B cell (primary cell): ENCODE measurements at regions of chr4 and their contacts with region 1.

Region 1: DNA sequence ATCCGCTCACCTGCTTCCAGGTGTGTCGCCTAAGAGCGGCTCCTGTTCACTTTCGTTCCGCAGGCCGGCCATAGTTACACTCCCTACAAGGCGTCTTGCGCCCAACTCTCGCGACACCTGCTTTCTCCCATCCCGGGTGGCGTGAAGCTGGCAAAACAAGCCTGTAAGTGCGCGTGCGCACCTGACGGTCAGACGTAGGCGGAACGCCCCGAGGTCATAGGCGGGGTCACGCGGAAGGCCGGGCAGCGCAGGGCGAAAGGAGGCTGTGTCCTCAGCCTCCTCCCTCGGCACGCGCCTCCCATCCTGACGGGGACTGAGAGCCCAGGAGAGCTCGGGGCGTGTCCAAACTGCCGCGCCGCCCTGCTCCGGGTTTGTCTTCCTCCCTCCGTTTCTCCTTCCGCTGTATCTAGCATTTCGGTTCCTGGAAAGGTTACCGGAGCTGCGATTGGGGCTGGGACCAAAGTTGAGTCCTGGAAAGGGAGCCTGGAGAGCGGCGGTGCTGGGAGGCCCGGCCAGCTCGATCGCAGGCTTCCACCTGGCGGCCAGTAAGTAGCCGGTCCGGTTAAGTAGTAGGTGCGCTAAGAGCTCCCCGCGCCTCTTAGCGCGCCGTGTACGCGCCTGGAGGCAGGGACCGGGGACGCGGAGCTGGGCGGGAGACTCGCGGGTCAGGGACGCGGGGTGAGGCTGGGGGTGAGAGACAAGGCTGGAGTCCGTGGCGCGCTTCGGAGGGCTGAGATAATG is at the starts of genes ABHD18 and MFSD8:
- DNase-seq: peak; percentile 100
- ATAC-seq: peak; percentile 97
- H3K4me3 ChIP-seq: peak within 1 kb of the TSS; percentile 76 to 100 (median 85)
- H3K4me3 Mint-ChIP-seq: peak within 1 kb of the TSS; percentile 98
- H3K27ac ChIP-seq: peak within 1 kb of the TSS; percentile 86 to 96
- H3K27ac Mint-ChIP-seq: peak within 1 kb of the TSS; percentile 97
- H3K4me1 ChIP-seq: peaks cover 5 to 18% of the 10 kb centered on the region in 2 donors
- H3K4me1 Mint-ChIP-seq: peaks cover 34% of the 10 kb centered on the region
- H3K27me3 ChIP-seq: no peaks in the 10 kb centered on the region
- H3K27me3 Mint-ChIP-seq: no peaks in the 10 kb centered on the region
- CTCF ChIP-seq: peak; percentile 33
- total RNA-seq, gene ABHD18: 17.5 and 18.3 TPM in 2 replicates
- total RNA-seq, gene MFSD8: 52.2 and 53.1 TPM in 2 replicates

Region 2: GRCh38 chr4:127905029-127905428 is 60.2 kb before region 1 on chr4:
- CTCF ChIA-PET with region 1: no interaction called
- POLR2A ChIA-PET with region 1: no interaction called
- intact Hi-C with region 1: no loop called
- DNase-seq: no peak
- ATAC-seq: no peak
- H3K4me3 ChIP-seq: no peak overlapping the region
- H3K4me3 Mint-ChIP-seq: no peak overlapping the region
- H3K27ac ChIP-seq: no peak overlapping the region
- H3K27ac Mint-ChIP-seq: no peak overlapping the region
- H3K4me1 ChIP-seq: no peaks in the 10 kb centered on the region
- H3K4me1 Mint-ChIP-seq: no peaks in the 10 kb centered on the region
- H3K27me3 ChIP-seq: no peaks in the 10 kb centered on the region
- H3K27me3 Mint-ChIP-seq: no peaks in the 10 kb centered on the region
- CTCF ChIP-seq: no peak

Region 3: DNA sequence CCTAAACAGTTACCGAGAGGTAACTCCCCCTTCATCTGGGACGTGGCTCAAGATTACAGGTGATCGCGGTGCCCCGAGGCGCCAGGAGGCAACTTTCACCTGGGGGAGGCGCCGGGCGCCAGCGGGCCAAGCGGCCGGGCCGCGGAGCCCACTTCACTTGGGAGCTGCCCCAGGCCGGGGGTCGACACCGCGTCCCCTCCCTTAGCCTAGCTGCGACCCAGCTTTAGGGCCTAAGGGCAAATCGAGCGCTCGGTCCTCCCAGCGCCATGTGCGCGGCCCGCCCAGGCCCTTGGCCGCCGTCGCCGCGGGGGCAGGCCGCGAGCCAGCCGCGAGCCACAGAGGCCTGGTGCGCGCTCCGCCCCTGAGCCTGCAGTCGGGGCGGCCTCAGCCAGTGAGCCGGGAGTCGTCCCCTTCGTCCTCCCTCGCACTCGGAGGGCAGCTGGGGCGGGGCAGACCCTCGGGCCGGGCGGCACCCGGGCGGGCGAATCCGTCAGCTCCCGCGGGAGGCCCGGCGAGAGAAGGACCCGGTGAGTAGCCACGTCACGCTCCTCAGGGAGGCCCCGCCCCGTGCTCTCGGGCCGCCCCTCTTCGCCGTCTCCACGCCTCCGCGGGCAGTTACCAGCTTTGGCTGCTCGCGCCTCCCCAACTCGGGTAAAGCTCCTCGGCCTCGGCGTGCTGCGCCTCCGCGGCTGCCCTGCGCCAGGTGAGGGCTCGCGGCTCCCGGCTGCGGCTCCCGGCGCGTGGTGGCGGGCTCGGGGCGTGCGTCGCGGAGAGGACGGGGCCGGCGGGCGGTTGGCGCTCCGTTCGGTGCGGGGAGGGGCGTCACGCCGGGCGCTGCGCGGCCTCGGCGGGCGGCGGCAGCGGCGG is 95.7 kb after region 1 on chr4 and contains the start of gene LARP1B:
- CTCF ChIA-PET with region 1: interaction called, 18 read pairs
- POLR2A ChIA-PET with region 1: interaction called, 20 read pairs
- intact Hi-C with region 1: loop called (anchors 1 kb)
- DNase-seq: peak; percentile 95
- ATAC-seq: peak; percentile 84
- H3K4me3 ChIP-seq: peak within 1 kb of the TSS; percentile 41 to 72 (median 66)
- H3K4me3 Mint-ChIP-seq: peak within 1 kb of the TSS; percentile 90
- H3K27ac ChIP-seq: peak within 1 kb of the TSS; percentile 84 to 96
- H3K27ac Mint-ChIP-seq: peak within 1 kb of the TSS; percentile 92
- H3K4me1 ChIP-seq: peaks cover 3 to 12% of the 10 kb centered on the region in 2 donors
- H3K4me1 Mint-ChIP-seq: peaks cover 11% of the 10 kb centered on the region
- H3K27me3 ChIP-seq: no peaks in the 10 kb centered on the region
- H3K27me3 Mint-ChIP-seq: no peaks in the 10 kb centered on the region
- CTCF ChIP-seq: no peak
- total RNA-seq, gene LARP1B: 13.6 and 14.6 TPM in 2 replicates